Posterior vena cava (tissue), 2 donors: ENCODE measurements at regions of chrX and their contacts with region 1.

Region 1: GRCh38 chrX:102659790-102660757 is 8.8 kb downstream of the GPRASP1 start:
- DNase-seq: peak; percentile 93

Region 2: GRCh38 chrX:102515975-102516941 is 143.8 kb before region 1 on chrX and contains the start of gene TMSB15A:
- intact Hi-C with region 1: loop called in 1 of 2 experiments (anchors 10 kb)
- DNase-seq: peak; percentile 87
- total RNA-seq, gene TMSB15A: 0.48 to 0.83 TPM

Region 3: GRCh38 chrX:104391906-104392305 is 1731.8 kb after region 1 on chrX:
- intact Hi-C with region 1: no loop called
- DNase-seq: no peak